ENCODE measurements at regions of chr13 and their contacts with region 1.

Region 1: GRCh38 chr13:46184277-46184699 is 2.3 kb upstream of the LCP1 start:
- DNase-seq: peak; percentile 61
- ATAC-seq: peak; percentile 53
- H3K4me3 Mint-ChIP-seq: peak overlapping the region; percentile 99
- H3K27ac Mint-ChIP-seq: peak overlapping the region; percentile 98
- H3K4me1 Mint-ChIP-seq: peaks cover 44% of the 10 kb centered on the region
- H3K27me3 Mint-ChIP-seq: no peaks in the 10 kb centered on the region
- CTCF ChIP-seq: no peak

Region 2: DNA sequence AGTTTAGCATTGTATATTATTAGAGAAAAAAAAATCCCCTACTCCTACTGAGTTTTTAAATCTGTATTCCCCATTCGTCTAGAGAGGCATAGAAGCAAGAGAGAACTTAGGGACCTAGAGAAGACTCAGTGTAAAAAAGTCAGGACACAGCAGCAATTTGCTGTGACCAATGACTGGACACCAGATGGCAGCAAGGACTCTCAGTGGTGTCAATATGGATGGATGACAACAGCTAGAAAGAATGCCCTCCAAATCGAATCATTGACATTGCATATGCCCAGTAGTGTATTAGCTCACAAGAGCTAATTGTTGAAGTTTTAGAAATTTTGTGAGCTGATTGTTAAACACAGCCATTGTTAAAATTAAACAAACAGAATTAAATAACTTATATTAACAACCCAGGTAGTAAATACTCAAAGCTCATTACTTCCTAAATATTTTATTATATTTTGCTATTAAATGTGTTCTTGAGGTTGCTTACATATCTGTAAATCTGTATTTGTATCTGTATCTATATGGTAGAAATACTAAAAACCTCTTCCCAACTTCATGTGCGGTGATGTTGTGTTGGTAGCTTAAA is 376.7 kb before region 1 on chr13:
- CTCF ChIA-PET with region 1: no interaction called
- POLR2A ChIA-PET with region 1: no interaction called
- intact Hi-C with region 1: loop called (anchors 1 kb)
- DNase-seq: no peak
- ATAC-seq: no peak
- H3K4me3 Mint-ChIP-seq: no peak overlapping the region
- H3K27ac Mint-ChIP-seq: no peak overlapping the region
- H3K4me1 Mint-ChIP-seq: no peaks in the 10 kb centered on the region
- H3K27me3 Mint-ChIP-seq: no peaks in the 10 kb centered on the region
- CTCF ChIP-seq: no peak

Region 3: DNA sequence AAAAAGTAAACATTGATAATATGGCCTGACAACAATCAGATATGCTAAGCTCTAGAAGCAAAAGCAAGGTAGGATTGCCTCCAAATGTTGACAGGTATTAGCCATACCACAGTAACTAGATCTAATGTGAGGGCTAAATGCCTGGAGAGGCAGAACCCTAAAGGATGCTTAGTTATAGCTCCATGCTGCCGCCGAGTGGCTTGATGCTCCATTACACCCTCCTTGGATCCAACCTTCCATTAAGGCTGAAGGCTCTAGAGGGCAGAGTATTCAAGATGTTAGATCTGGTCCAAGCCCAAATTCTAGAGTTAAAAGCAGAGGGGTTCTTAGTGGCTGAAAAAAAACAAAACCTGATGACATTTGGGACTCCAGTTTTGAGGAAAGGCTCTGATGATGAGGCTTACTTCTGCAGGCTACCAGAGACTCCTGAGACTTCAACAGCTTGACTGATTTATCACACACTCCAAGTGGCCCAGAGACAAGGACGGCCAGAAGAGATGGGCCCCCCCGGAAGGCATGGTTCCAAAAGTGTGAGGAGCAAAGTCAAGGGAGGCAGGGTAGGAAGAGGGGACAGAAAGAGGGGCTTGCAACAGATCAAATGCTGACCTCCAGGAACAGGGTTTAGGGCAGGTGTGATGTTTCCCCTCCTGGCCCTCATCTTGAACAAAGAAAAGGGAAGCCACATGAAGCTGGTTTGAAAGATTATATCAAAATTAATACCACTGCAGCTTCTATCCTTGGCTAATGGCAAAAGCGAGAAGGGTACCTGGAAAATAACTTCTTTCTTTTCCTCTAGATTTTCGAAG is 57.5 kb before region 1 on chr13:
- CTCF ChIA-PET with region 1: interaction called, 3 read pairs
- POLR2A ChIA-PET with region 1: interaction called, 4 read pairs
- intact Hi-C with region 1: loop called (anchors 1 kb)
- DNase-seq: peak; percentile 27
- ATAC-seq: peak; percentile 89
- H3K4me3 Mint-ChIP-seq: no peak overlapping the region
- H3K27ac Mint-ChIP-seq: peak overlapping the region; percentile 9
- H3K4me1 Mint-ChIP-seq: peaks cover 30% of the 10 kb centered on the region
- H3K27me3 Mint-ChIP-seq: no peaks in the 10 kb centered on the region
- CTCF ChIP-seq: no peak

Region 4: GRCh38 chr13:46160471-46161066 is 23.7 kb before region 1 on chr13:
- CTCF ChIA-PET with region 1: interaction called, 41 read pairs
- POLR2A ChIA-PET with region 1: interaction called, 247 read pairs
- intact Hi-C with region 1: loop called (anchors 1 kb)
- DNase-seq: no peak
- ATAC-seq: peak; percentile 45
- H3K4me3 Mint-ChIP-seq: peak overlapping the region; percentile 70
- H3K27ac Mint-ChIP-seq: peak overlapping the region; percentile 88
- H3K4me1 Mint-ChIP-seq: peaks cover 61% of the 10 kb centered on the region
- H3K27me3 Mint-ChIP-seq: no peaks in the 10 kb centered on the region
- CTCF ChIP-seq: no peak

Region 5: DNA sequence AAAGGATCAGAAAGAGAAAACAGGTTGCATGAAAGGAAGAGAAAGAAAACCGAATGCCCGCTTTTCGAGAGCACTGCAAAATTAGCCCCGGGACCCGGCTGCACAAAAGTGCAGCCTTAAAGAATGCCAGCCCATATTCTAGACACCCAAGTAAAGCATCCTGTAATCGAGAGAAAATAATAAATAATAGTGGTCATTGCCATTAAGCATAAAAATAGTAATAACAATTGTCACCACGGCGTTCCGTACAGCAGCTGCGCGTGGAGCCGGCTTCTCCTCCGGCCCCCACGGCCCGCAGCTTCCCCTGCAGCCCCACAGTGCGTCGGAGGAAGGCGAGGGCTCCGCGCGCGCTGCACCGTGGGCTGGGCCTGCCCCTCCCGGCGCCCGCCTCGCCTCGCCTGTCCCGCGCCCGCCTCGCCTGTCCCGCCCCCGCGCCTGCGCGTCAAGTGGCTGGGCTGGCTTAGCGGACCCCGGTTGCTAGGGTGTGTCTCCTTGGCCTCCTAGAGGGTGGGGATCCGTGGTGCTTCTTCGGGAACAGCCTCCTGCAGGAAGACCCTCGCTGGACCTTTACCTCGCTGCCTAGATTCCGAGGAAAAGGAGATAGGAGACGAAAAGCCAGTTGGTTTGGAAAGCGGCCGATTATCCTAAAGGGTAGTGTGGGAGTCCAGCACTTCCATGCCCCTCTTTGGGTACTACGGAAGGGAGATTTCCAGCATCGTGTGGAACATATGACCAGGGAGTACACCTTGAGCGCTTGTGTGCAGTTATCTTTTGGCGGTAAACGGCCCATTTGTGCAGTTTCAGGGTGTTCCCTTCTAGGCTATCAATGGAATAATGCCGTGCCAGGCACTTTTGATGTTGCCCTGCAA is 27.4 kb after region 1 on chr13 and contains the start of gene LRRC63:
- CTCF ChIA-PET with region 1: no interaction called
- POLR2A ChIA-PET with region 1: interaction called, 10 read pairs
- intact Hi-C with region 1: loop called (anchors 1 kb)
- DNase-seq: peak; percentile 73
- ATAC-seq: peak; percentile 99
- H3K4me3 Mint-ChIP-seq: peak within 1 kb of the TSS; percentile 78
- H3K27ac Mint-ChIP-seq: peak within 1 kb of the TSS; percentile 21
- H3K4me1 Mint-ChIP-seq: peaks cover 22% of the 10 kb centered on the region
- H3K27me3 Mint-ChIP-seq: no peaks in the 10 kb centered on the region
- CTCF ChIP-seq: no peak
- total RNA-seq, gene LRRC63: 0.10 TPM in 1 of 2 replicates, not detected in the other

Region 6: GRCh38 chr13:46387064-46387851 is 203.0 kb after region 1 on chr13 and contains the start of gene RUBCNL:
- CTCF ChIA-PET with region 1: no interaction called
- POLR2A ChIA-PET with region 1: interaction called, 14 read pairs
- intact Hi-C with region 1: loop called (anchors 1 kb)
- DNase-seq: peak; percentile 69
- ATAC-seq: peak; percentile 46
- H3K4me3 Mint-ChIP-seq: peak within 1 kb of the TSS; percentile 95
- H3K27ac Mint-ChIP-seq: peak within 1 kb of the TSS; percentile 93
- H3K4me1 Mint-ChIP-seq: peaks cover 68% of the 10 kb centered on the region
- H3K27me3 Mint-ChIP-seq: no peaks in the 10 kb centered on the region
- CTCF ChIP-seq: no peak
- total RNA-seq, gene RUBCNL: 133 and 168 TPM in 2 replicates

Region 7: DNA sequence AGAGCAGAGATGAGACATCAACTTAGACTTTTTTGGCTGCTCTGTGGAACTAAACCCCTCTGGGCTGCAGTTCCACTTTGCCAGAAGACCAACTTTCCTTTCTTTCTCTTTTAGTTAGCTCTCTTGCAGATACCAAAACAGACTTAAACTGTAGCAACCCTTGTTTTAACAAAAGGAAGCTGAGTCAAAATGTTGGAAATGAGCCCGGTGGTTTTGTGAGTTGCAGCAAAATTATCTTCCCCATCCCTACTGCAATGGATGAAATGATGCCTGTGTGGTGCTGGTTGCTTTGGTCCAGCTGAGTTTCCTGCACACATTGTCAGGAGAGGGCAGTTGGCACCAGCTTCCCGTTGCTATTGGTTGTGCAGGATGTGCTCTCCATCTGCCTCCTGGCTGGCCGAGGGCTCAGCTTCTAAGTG is 484.0 kb after region 1 on chr13:
- CTCF ChIA-PET with region 1: no interaction called
- POLR2A ChIA-PET with region 1: no interaction called
- intact Hi-C with region 1: loop called (anchors 5 kb)
- DNase-seq: no peak
- ATAC-seq: peak; percentile 32
- H3K4me3 Mint-ChIP-seq: peak overlapping the region; percentile 81
- H3K27ac Mint-ChIP-seq: peak overlapping the region; percentile 86
- H3K4me1 Mint-ChIP-seq: peaks cover 72% of the 10 kb centered on the region
- H3K27me3 Mint-ChIP-seq: no peaks in the 10 kb centered on the region
- CTCF ChIP-seq: no peak

Region 8: GRCh38 chr13:46804391-46804815 is 620.1 kb after region 1 on chr13:
- CTCF ChIA-PET with region 1: no interaction called
- POLR2A ChIA-PET with region 1: no interaction called
- intact Hi-C with region 1: no loop called
- DNase-seq: no peak
- ATAC-seq: no peak
- H3K4me3 Mint-ChIP-seq: no peak overlapping the region
- H3K27ac Mint-ChIP-seq: no peak overlapping the region
- H3K4me1 Mint-ChIP-seq: no peaks in the 10 kb centered on the region
- H3K27me3 Mint-ChIP-seq: peaks cover 10% of the 10 kb centered on the region
- CTCF ChIP-seq: no peak